CD4-positive, alpha-beta memory T cell (primary cell): ENCODE measurements at regions of chr17 and their contacts with region 1.

Region 1: GRCh38 chr17:60392042-60392844 is at the start of gene USP32:
- DNase-seq: peak; percentile 96 to 98 (median 97)
- H3K4me3 ChIP-seq: peak within 1 kb of the TSS; percentile 47 to 67
- H3K4me3 Mint-ChIP-seq: peak within 1 kb of the TSS; percentile 92 to 97 (median 96)
- H3K27ac ChIP-seq: peak within 1 kb of the TSS; percentile 84
- H3K27ac Mint-ChIP-seq: peak within 1 kb of the TSS; percentile 96 to 99 (median 98)
- H3K4me1 ChIP-seq: peaks cover 22% of the 10 kb centered on the region
- H3K4me1 Mint-ChIP-seq: peaks cover 30 to 49% (median 36%) of the 10 kb centered on the region in 4 donors
- H3K27me3 ChIP-seq: no peaks in the 10 kb centered on the region
- H3K27me3 Mint-ChIP-seq: no peaks in the 10 kb centered on the region
- total RNA-seq, gene USP32: 31.1 to 36.2 TPM

Region 2: GRCh38 chr17:59892924-59893676 is 499.1 kb before region 1 on chr17 and contains the starts of genes RPS6KB1 and TUBD1:
- CTCF ChIA-PET with region 1: no interaction called
- POLR2A ChIA-PET with region 1: no interaction called
- intact Hi-C with region 1: loop called (anchors 5 kb)
- DNase-seq: peak; percentile 96 to 99 (median 98)
- H3K4me3 ChIP-seq: peak within 1 kb of the TSS; percentile 68 to 83
- H3K4me3 Mint-ChIP-seq: peak within 1 kb of the TSS; percentile 99 to 100 (median 100)
- H3K27ac ChIP-seq: peak within 1 kb of the TSS; percentile 96
- H3K27ac Mint-ChIP-seq: peak within 1 kb of the TSS; percentile 93 to 100 (median 99)
- H3K4me1 ChIP-seq: peaks cover 51% of the 10 kb centered on the region
- H3K4me1 Mint-ChIP-seq: peaks cover 35 to 67% (median 50%) of the 10 kb centered on the region in 4 donors
- H3K27me3 ChIP-seq: no peaks in the 10 kb centered on the region
- H3K27me3 Mint-ChIP-seq: no peaks in the 10 kb centered on the region
- total RNA-seq, gene RPS6KB1: 57.2 to 67.4 TPM
- total RNA-seq, gene TUBD1: 42.4 to 44.0 TPM

Region 3: DNA sequence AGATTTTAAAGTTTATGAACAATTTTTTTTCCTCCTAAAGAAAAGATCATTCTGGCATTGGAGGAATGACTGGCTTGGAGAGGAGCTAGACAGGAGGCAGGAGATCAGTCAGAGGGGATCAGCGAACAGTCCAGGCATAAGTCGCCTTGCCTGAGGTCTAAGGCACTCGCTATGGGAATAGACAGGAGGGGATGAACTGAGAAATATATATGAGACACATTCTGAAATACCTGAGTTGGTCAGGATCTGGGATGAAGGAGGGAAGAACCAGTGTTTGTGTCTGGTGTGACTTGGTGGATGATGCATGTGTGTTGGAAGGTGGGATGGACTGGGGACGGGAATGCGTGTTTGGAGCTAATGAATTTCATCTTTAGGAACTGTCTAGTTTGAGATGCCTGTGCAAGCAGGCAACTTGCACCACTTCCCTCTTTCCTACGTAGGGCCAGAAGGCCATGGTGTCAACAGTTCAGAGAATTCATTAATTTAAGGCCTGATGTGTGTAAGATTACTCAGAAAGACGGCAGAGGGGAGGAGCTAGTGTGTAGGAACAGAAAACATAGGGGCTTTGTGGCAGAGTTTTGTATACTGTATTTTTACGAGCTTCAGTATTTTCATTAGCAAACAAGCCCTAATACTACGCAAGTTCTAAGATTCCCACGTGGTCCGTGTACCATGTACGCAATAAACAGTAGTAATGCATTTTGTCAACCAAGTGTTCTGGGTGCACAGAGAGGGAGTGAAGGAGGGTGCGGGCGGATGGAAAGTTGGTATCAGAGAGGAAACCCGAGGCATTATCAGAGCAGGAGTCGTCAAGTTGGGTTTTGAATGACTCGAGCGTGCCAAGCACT is 314.3 kb before region 1 on chr17:
- CTCF ChIA-PET with region 1: no interaction called
- POLR2A ChIA-PET with region 1: interaction called, 4 read pairs
- intact Hi-C with region 1: loop called (anchors 5 kb)
- DNase-seq: peak in 4 of 5 donors; percentile 33 to 69 (median 48)
- H3K4me3 ChIP-seq: peak overlapping the region; percentile 62 to 89
- H3K4me3 Mint-ChIP-seq: peak overlapping the region; percentile 90 to 99 (median 97)
- H3K27ac ChIP-seq: peak overlapping the region; percentile 50
- H3K27ac Mint-ChIP-seq: peak overlapping the region; percentile 84 to 99 (median 95)
- H3K4me1 ChIP-seq: peaks cover 18% of the 10 kb centered on the region
- H3K4me1 Mint-ChIP-seq: peaks cover 18 to 22% (median 20%) of the 10 kb centered on the region in 4 donors
- H3K27me3 ChIP-seq: no peaks in the 10 kb centered on the region
- H3K27me3 Mint-ChIP-seq: no peaks in the 10 kb centered on the region

Region 4: GRCh38 chr17:60421273-60421934 is 29.2 kb after region 1 on chr17:
- CTCF ChIA-PET with region 1: interaction called, 5 read pairs
- POLR2A ChIA-PET with region 1: interaction called, 3 read pairs
- intact Hi-C with region 1: loop called (anchors 1 kb)
- DNase-seq: peak; percentile 60 to 73 (median 70)
- H3K4me3 ChIP-seq: peak overlapping the region; percentile 52 to 66
- H3K4me3 Mint-ChIP-seq: peak overlapping the region; percentile 72 to 88 (median 80)
- H3K27ac ChIP-seq: peak overlapping the region; percentile 16
- H3K27ac Mint-ChIP-seq: peak overlapping the region in 6 of 7 donors; percentile 57 to 80 (median 68)
- H3K4me1 ChIP-seq: peaks cover 7% of the 10 kb centered on the region
- H3K4me1 Mint-ChIP-seq: peaks cover 5 to 10% (median 7%) of the 10 kb centered on the region in 4 donors
- H3K27me3 ChIP-seq: no peaks in the 10 kb centered on the region
- H3K27me3 Mint-ChIP-seq: no peaks in the 10 kb centered on the region

Region 5: GRCh38 chr17:60525685-60526514 is 133.7 kb after region 1 on chr17 and contains the start of gene APPBP2:
- CTCF ChIA-PET with region 1: no interaction called
- POLR2A ChIA-PET with region 1: no interaction called
- intact Hi-C with region 1: loop called (anchors 1 kb)
- DNase-seq: peak; percentile 71 to 85 (median 75)
- H3K4me3 ChIP-seq: peak within 1 kb of the TSS; percentile 93 to 96
- H3K4me3 Mint-ChIP-seq: peak within 1 kb of the TSS; percentile 97 to 100 (median 99)
- H3K27ac ChIP-seq: peak within 1 kb of the TSS; percentile 98
- H3K27ac Mint-ChIP-seq: peak within 1 kb of the TSS; percentile 96 to 99 (median 99)
- H3K4me1 ChIP-seq: peaks cover 34% of the 10 kb centered on the region
- H3K4me1 Mint-ChIP-seq: peaks cover 32 to 62% (median 48%) of the 10 kb centered on the region in 4 donors
- H3K27me3 ChIP-seq: no peaks in the 10 kb centered on the region
- H3K27me3 Mint-ChIP-seq: peaks cover 0 to 2% of the 10 kb centered on the region in 2 donors
- total RNA-seq, gene APPBP2: 48.4 to 50.8 TPM

Region 6: GRCh38 chr17:60599620-60600489 is 207.6 kb after region 1 on chr17 and contains the start of gene PPM1D:
- CTCF ChIA-PET with region 1: no interaction called
- POLR2A ChIA-PET with region 1: interaction called, 9 read pairs
- intact Hi-C with region 1: loop called (anchors 1 kb)
- DNase-seq: peak; percentile 96 to 97 (median 96)
- H3K4me3 ChIP-seq: peak within 1 kb of the TSS; percentile 97 to 98
- H3K4me3 Mint-ChIP-seq: peak within 1 kb of the TSS; percentile 95 to 99 (median 98)
- H3K27ac ChIP-seq: peak within 1 kb of the TSS; percentile 94
- H3K27ac Mint-ChIP-seq: peak within 1 kb of the TSS; percentile 97 to 98 (median 98)
- H3K4me1 ChIP-seq: peaks cover 37% of the 10 kb centered on the region
- H3K4me1 Mint-ChIP-seq: peaks cover 25 to 57% (median 38%) of the 10 kb centered on the region in 4 donors
- H3K27me3 ChIP-seq: no peaks in the 10 kb centered on the region
- H3K27me3 Mint-ChIP-seq: no peaks in the 10 kb centered on the region
- total RNA-seq, gene PPM1D: 18.9 to 19.4 TPM

Region 7: DNA sequence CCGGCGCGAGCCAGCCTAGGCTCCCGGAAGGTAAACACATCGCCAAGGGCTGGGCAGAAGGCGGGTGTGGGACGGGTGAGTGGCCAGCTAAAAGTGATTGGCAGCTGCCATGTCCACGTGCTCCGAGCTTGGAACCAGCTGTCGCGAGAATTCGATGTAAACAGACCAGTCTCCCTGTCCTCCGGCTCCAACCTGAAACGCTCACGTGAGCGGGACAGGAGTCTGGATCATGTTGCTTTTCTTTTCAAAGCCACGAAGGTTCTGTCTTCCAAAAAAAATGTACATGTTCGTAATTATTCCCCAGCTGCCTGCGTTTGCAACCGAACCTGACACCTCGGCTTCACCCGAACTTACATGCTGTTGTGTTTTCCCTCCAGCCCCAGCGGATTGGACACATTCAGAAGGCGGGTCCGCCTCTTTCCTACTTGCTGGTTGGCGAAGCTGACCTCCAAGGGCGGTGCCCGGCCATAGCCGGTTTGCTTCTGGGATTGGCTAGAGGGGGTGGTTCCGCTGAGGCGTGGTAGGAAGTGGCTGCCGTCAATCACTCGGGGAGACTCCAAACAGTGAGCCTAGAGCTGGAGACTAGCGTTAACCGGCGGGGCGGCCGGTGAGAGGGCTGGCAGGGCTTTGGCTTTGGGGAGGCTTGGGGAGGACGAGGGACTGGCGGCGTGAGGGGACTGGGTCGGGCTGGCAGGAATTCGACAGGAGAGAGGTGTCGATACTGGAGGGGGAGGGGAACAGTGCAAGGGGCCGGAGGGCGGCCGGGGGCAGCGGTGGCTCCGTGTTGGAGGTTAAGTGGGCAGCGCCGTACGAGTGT is 285.3 kb after region 1 on chr17 and contains the start of gene BCAS3:
- CTCF ChIA-PET with region 1: no interaction called
- POLR2A ChIA-PET with region 1: interaction called, 11 read pairs
- intact Hi-C with region 1: loop called (anchors 2 kb)
- DNase-seq: peak; percentile 96 to 99 (median 97)
- H3K4me3 ChIP-seq: peak within 1 kb of the TSS; percentile 65 to 96
- H3K4me3 Mint-ChIP-seq: peak within 1 kb of the TSS; percentile 91 to 99 (median 97)
- H3K27ac ChIP-seq: peak within 1 kb of the TSS; percentile 72
- H3K27ac Mint-ChIP-seq: peak within 1 kb of the TSS; percentile 93 to 99 (median 98)
- H3K4me1 ChIP-seq: peaks cover 14% of the 10 kb centered on the region
- H3K4me1 Mint-ChIP-seq: peaks cover 17 to 26% (median 23%) of the 10 kb centered on the region in 4 donors
- H3K27me3 ChIP-seq: no peaks in the 10 kb centered on the region
- H3K27me3 Mint-ChIP-seq: no peaks in the 10 kb centered on the region
- total RNA-seq, gene BCAS3: 40.3 to 42.2 TPM